ENCODE measurements at regions of chr18 and their contacts with region 1.

Region 1: DNA sequence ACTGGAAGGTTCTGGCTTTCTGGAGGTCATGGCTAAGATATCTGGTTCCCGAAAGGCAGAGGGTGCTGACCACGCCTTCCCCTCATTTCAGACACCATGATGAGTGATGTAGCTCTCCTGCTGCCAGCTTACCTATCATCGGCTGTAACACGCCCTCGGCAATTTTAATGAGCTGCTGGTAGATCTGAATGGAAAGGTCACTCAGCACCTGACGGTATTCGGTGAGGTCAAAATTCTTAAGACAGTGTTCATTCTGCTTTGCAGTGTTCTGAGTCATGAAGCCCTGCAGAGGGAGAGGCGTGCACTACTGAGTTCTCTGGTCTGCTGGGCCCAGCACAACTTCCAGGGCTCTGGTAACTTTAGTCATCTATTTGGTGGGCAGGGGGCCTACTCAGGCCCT is 25.7 kb upstream of the ACAA2 start:
- DNase-seq: peak; percentile 42 to 72
- H3K4me3 ChIP-seq: no peak overlapping the region
- H3K27ac ChIP-seq: no peak overlapping the region
- H3K4me1 ChIP-seq: peaks cover 15% of the 10 kb centered on the region
- H3K27me3 ChIP-seq: no peaks in the 10 kb centered on the region
- CTCF ChIP-seq: no peak

Region 2: DNA sequence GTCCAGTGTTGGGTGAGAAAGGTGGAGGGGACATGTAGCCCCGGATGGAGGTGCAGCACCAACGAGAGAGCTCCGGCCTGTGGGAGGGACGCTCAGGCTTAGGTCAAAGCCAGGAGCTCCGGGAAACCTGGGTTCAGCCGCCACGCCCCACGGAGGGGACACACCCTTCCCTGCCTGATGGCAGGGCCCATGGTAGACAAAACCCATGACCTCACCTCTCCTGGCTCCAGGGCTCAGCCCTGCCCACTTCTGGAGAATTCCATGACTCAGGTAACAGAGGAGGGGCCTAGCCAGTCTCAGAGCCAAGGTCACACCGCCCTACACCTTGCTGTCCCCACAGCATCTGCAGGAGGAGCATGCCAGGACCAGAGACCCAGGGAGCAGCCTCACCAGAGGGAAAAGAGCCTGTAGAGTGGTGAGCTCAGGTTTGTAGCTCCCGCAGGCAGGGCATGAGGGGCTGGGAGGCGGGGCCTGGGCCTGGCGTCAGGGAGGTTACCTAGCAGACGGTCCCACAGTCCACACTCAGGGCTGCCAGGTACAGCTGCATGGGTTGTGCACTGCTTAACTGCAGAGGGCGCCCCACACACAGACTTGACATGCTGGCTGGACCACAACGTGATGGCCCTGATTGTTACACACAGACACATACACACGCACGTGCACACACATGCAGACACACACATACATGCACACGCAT is 817.4 kb before region 1 on chr18:
- CTCF ChIA-PET with region 1: no interaction called
- POLR2A ChIA-PET with region 1: no interaction called
- intact Hi-C with region 1: no loop called
- DNase-seq: peak; percentile 86 to 92
- H3K4me3 ChIP-seq: peak overlapping the region; percentile 56
- H3K27ac ChIP-seq: peak overlapping the region; percentile 64
- H3K4me1 ChIP-seq: peaks cover 35% of the 10 kb centered on the region
- H3K27me3 ChIP-seq: no peaks in the 10 kb centered on the region
- CTCF ChIP-seq: peak; percentile 76

Region 3: DNA sequence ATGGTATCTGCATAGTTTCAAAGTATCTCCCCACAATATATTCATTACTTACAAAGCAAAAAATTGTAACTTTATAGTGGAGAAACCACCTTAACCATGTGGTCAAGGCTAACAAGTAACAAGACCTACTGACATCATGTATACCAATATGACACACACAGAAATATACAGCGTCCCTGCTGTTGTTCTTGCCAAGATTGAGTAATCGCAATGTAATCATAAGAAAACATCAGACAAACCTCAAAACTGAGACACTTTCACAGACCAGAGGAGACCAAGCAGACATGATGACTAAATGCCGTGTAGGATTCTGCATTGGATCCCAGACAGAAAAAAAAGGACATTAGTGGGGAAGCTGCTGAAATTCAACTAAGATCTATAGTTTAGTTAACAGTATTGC is 148.7 kb before region 1 on chr18:
- CTCF ChIA-PET with region 1: no interaction called
- POLR2A ChIA-PET with region 1: interaction called, 12 read pairs
- intact Hi-C with region 1: no loop called
- DNase-seq: peak; percentile 3 to 91
- H3K4me3 ChIP-seq: no peak overlapping the region; the same call in 1 of the 2 replicates
- H3K27ac ChIP-seq: peak overlapping the region; percentile 94
- H3K4me1 ChIP-seq: peaks cover 39% of the 10 kb centered on the region
- H3K27me3 ChIP-seq: no peaks in the 10 kb centered on the region
- CTCF ChIP-seq: no peak

Measured in PC-9 (cell line).